Activated naive CD4-positive, alpha-beta T cell treated with anti-CD3 and anti-CD28 coated beads for 36 hours (primary cell): ENCODE measurements at regions of chr1 and their contacts with region 1.

Region 1: GRCh38 chr1:19882111-19883071 is at the start of gene OTUD3:
- DNase-seq: peak; percentile 96
- H3K4me3 Mint-ChIP-seq: peak within 1 kb of the TSS; percentile 83
- H3K27ac Mint-ChIP-seq: peak within 1 kb of the TSS; percentile 42
- H3K4me1 Mint-ChIP-seq: peaks cover 37% of the 10 kb centered on the region
- H3K27me3 Mint-ChIP-seq: no peaks in the 10 kb centered on the region
- total RNA-seq, gene OTUD3: 8.3 to 10.8 TPM

Region 2: DNA sequence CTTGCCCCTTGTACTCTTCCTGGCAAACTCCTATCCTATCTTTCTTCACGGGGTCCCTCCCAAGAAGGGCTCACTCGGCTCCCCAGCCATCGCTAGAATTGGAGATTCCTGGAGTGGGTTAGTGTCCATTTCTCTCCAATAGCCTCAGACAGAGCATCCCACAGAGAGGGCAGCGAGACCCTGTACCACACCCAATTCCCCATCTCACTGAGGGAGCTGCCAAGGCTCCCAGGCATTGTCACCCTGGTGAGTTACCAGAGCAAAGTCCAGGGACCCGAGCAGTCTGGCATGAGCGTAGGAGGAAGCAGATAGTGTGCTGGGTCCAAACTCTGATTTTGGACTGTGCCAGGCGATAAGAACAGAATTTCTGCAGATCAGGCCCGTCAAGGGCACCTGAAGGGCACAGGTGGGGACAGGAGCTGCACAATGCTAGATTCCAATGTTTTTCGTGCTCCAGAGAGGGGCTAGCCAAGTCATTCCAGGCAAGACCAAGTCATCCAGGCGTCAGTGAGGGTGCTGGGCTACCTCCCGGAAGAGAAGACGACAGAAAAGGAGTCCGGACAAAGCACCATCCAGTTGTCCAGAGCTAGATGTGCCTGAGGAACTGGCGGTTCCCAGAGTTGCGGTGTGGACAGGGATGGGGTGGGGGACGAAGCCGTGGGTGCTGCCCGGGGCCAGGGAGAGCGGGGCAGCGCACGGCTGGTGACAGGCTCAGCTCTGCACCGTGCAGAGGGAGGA is 609.1 kb before region 1 on chr1:
- CTCF ChIA-PET with region 1: no interaction called
- intact Hi-C with region 1: no loop called
- DNase-seq: no peak
- H3K4me3 Mint-ChIP-seq: no peak overlapping the region
- H3K27ac Mint-ChIP-seq: no peak overlapping the region
- H3K4me1 Mint-ChIP-seq: peaks cover 2% of the 10 kb centered on the region
- H3K27me3 Mint-ChIP-seq: peaks cover 15% of the 10 kb centered on the region

Region 3: DNA sequence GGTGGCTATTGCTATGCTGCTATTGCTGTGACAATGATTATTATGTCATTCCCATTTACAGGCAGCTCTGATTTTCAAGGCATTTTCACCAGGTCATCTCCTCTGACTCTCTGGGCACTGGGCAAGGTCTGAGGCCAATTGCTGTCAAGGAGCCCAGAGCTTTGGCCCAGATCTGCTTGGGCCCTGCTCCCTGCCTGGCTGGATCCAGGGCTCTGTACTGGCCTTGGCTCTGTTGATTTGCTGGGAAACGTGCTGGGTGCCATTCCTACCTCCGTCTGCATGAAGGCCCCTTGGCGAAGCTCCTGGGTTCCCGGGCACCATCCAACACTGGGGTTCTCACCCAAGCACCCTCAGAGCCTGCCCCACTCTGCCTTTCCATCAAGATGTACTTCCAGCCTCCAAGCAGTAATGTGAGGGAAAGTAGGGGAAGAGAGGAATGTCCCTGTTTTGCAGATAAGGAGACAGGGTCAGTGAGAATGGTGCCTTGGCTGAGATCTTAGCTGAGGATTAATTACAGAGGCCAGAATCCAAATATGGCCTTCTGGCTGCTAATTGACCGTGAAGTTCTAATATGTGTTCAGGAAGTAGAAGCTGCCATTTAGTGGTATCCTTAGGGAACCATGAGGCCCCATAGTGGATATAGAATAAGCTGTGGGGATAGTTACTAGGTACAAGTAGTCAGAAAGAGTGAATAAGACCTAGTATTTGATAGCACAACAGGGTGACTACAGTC is 153.8 kb before region 1 on chr1:
- CTCF ChIA-PET with region 1: no interaction called
- intact Hi-C with region 1: no loop called
- DNase-seq: no peak
- H3K4me3 Mint-ChIP-seq: no peak overlapping the region
- H3K27ac Mint-ChIP-seq: no peak overlapping the region
- H3K4me1 Mint-ChIP-seq: no peaks in the 10 kb centered on the region
- H3K27me3 Mint-ChIP-seq: no peaks in the 10 kb centered on the region

Region 4: GRCh38 chr1:19762175-19762779 is 120.1 kb before region 1 on chr1:
- CTCF ChIA-PET with region 1: interaction called, 4 read pairs
- intact Hi-C with region 1: loop called (anchors 2 kb)
- DNase-seq: peak; percentile 52
- H3K4me3 Mint-ChIP-seq: no peak overlapping the region
- H3K27ac Mint-ChIP-seq: no peak overlapping the region
- H3K4me1 Mint-ChIP-seq: peaks cover 16% of the 10 kb centered on the region
- H3K27me3 Mint-ChIP-seq: no peaks in the 10 kb centered on the region

Region 5: GRCh38 chr1:19799877-19800804 is 82.2 kb before region 1 on chr1 and contains the start of gene TMCO4:
- CTCF ChIA-PET with region 1: interaction called, 3 read pairs
- intact Hi-C with region 1: loop called (anchors 2 kb)
- DNase-seq: peak; percentile 67
- H3K4me3 Mint-ChIP-seq: peak within 1 kb of the TSS; percentile 78
- H3K27ac Mint-ChIP-seq: peak within 1 kb of the TSS; percentile 90
- H3K4me1 Mint-ChIP-seq: peaks cover 16% of the 10 kb centered on the region
- H3K27me3 Mint-ChIP-seq: no peaks in the 10 kb centered on the region
- total RNA-seq, gene TMCO4: 11.9 to 15.4 TPM

Region 6: GRCh38 chr1:20058531-20058930 is 176.1 kb after region 1 on chr1:
- CTCF ChIA-PET with region 1: no interaction called
- intact Hi-C with region 1: no loop called
- DNase-seq: peak; percentile 80
- H3K4me3 Mint-ChIP-seq: no peak overlapping the region
- H3K27ac Mint-ChIP-seq: no peak overlapping the region
- H3K4me1 Mint-ChIP-seq: peaks cover 27% of the 10 kb centered on the region
- H3K27me3 Mint-ChIP-seq: peaks cover 6% of the 10 kb centered on the region

Region 7: GRCh38 chr1:20126041-20126805 is 243.8 kb after region 1 on chr1:
- CTCF ChIA-PET with region 1: no interaction called
- intact Hi-C with region 1: no loop called
- DNase-seq: no peak
- H3K4me3 Mint-ChIP-seq: no peak overlapping the region
- H3K27ac Mint-ChIP-seq: no peak overlapping the region
- H3K4me1 Mint-ChIP-seq: no peaks in the 10 kb centered on the region
- H3K27me3 Mint-ChIP-seq: peaks cover under 1% of the 10 kb centered on the region